GM12878 (cell line): ENCODE measurements at regions of chr18 and their contacts with region 1.

Region 1: DNA sequence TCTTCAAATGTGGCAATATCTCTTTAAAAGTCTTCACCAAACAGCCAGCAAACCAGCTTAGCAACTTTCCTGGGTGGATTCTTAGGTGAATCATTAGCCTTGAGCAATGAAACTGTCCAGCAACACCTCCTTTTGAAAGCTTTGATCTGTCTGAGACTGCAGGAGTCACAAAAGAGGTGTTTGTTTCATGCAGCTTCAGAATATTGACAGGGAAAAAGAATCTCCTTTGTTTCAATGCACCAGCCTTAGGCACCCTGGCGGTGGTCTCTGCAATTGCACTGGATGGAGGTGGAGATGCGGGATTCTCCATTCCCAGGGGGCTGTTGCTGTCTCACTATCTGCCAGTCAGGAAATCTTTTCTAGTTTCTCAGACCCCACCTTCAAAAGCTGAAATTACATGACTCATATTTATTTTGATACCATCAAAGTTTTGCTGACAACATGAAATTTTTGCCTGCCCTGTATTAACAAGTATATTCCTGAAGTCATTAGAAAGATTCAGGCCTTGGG is 76.0 kb upstream of the DSG1 start:
- DNase-seq: no peak
- ATAC-seq: peak; percentile 82
- H3K4me3 ChIP-seq: no peak overlapping the region
- H3K27ac ChIP-seq: no peak overlapping the region
- H3K4me1 ChIP-seq: peaks cover 3% of the 10 kb centered on the region; the same call in 1 of the 2 replicates
- H3K27me3 ChIP-seq: no peaks in the 10 kb centered on the region
- CTCF ChIP-seq: peak; percentile 31 to 56 (median 49)
- EP300 ChIP-seq: no peak
- POLR2A ChIP-seq: no peak
- RAD21 ChIP-seq: no peak

Region 2: DNA sequence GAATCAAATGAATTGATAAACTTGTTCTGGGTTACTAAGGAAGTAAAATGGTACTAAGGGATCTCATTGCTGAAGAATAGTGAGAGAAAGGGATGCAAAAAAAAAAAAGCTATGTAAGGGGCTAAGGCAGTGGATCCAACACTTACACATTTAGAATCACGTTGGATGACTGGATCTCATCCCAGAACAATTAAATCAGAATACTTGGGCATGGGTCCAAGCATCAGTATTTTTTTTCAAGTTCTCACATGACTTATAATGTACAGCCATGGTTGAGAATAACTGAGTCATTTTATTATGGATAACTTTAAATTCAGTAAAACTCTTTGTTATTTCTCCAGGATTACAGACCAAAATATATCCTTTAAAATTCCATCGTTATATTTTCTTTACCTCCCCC is 87.8 kb before region 1 on chr18:
- CTCF ChIA-PET with region 1: no interaction called
- POLR2A ChIA-PET with region 1: no interaction called
- RAD21 ChIA-PET with region 1: no interaction called
- SMC1A ChIA-PET with region 1: no interaction called
- in situ Hi-C with region 1: no loop called
- intact Hi-C with region 1: no loop called
- DNase-seq: no peak
- ATAC-seq: no peak
- H3K4me3 ChIP-seq: no peak overlapping the region
- H3K27ac ChIP-seq: no peak overlapping the region
- H3K4me1 ChIP-seq: no peaks in the 10 kb centered on the region
- H3K27me3 ChIP-seq: no peaks in the 10 kb centered on the region
- CTCF ChIP-seq: no peak
- EP300 ChIP-seq: no peak
- POLR2A ChIP-seq: no peak
- RAD21 ChIP-seq: no peak

Region 3: DNA sequence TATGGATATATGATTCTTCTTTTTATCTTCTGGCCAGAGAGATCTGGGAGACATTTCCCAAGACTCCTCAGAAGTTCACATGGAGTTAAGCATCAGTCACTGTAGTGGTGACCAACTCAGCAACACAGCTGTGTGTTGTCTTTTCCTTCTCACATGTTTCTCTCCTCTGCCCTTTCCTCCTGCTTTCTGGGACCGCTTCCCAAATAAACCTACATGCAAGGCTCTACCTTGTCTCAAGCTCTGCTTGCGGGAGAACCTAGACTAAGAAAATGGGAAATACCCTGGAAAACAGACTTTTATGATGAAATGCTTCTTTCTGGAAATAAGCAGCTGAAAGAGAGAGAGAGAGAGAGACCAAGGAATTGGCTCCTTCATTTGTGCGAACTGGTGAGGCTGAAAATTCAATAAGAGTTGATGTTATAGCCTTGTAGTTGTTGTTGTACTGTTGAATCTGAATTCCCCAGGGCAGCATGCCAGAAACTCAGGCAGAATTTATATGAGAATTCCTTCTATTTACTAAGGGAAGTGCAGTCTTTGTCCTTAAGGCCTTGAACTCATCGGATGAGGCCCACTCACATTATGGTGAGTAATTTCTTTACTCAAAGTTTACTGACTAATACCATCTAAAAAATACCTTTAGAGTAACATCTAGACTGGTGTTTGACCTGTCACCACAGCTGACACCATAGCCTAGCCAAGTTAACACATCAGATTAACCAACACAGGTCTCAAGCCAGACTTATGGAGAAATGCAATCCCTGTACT is 56.6 kb before region 1 on chr18:
- CTCF ChIA-PET with region 1: no interaction called
- POLR2A ChIA-PET with region 1: no interaction called
- RAD21 ChIA-PET with region 1: no interaction called
- SMC1A ChIA-PET with region 1: no interaction called
- in situ Hi-C with region 1: no loop called
- intact Hi-C with region 1: no loop called
- DNase-seq: no peak
- ATAC-seq: no peak
- H3K4me3 ChIP-seq: no peak overlapping the region
- H3K27ac ChIP-seq: no peak overlapping the region
- H3K4me1 ChIP-seq: no peaks in the 10 kb centered on the region
- H3K27me3 ChIP-seq: no peaks in the 10 kb centered on the region
- CTCF ChIP-seq: no peak
- EP300 ChIP-seq: no peak
- POLR2A ChIP-seq: no peak
- RAD21 ChIP-seq: no peak

Region 4: DNA sequence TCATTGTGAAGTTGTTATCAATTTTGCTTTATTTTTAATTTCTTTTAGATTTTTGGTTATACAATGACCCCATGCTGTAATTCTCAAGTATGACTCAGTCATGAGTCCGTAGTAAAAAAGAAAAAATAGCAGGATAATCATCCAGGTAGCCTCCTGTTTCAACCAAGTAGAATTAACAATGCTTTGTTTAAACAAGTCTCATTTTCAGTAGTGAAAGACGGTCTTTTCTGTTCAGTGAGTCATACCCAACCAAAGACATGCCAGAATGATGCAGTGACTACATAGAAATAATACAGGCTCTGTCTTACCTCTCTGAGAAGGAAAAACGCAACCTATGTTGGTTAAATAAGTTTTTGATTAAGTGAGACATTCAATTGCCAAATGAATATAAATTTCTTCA is 11.5 kb before region 1 on chr18:
- CTCF ChIA-PET with region 1: interaction called, 11 read pairs
- POLR2A ChIA-PET with region 1: no interaction called
- RAD21 ChIA-PET with region 1: interaction called, 4 read pairs
- SMC1A ChIA-PET with region 1: interaction called, 12 read pairs
- in situ Hi-C with region 1: no loop called
- intact Hi-C with region 1: no loop called
- DNase-seq: peak; percentile 52
- ATAC-seq: peak; percentile 91
- H3K4me3 ChIP-seq: no peak overlapping the region
- H3K27ac ChIP-seq: peak overlapping the region; percentile 72
- H3K4me1 ChIP-seq: peaks cover 24% of the 10 kb centered on the region
- H3K27me3 ChIP-seq: no peaks in the 10 kb centered on the region
- CTCF ChIP-seq: no peak
- EP300 ChIP-seq: peak; percentile 35 to 77; a peak in 2 of 4 replicates
- POLR2A ChIP-seq: no peak
- RAD21 ChIP-seq: peak; percentile 10; the same call in 1 of the 2 replicates

Region 5: DNA sequence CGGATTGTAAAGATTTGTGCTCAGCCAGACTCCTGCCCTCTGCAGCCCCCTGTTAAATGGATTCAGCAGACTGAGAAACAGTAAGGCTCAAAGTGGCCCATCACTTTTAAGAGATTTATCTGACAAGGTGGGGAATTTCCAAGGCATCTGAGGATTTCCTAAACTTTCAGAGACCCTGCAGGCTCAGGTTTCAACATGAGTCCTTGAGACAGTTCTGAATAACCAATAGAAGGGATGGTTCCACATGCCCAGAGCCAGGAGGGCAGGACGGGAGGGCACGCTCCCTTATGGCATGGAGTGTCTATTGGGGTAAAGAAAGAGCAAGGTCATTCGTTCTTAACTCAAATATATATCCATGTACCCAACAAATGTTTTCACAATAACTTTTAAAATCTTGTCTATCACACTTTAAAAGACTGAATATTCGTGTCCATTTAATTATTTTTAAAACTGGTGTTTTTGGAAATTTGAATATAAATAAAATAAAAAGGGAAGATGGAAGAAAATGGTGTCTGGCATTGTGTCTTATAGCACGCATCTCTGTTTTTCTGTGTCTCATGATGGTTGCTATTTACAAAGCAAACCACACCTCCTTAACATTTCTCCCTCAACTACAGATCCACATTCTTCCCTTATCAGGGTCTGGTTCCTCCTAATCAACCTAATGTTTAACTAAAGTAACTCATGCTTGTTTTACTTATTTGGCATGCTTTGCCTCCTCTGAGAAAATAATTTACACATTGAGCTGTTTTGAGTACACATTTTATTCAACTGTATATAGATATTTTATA is 20.0 kb after region 1 on chr18:
- CTCF ChIA-PET with region 1: interaction called, 8 read pairs
- POLR2A ChIA-PET with region 1: interaction called, 10 read pairs
- RAD21 ChIA-PET with region 1: interaction called, 4 read pairs
- SMC1A ChIA-PET with region 1: interaction called, 64 read pairs
- in situ Hi-C with region 1: no loop called
- intact Hi-C with region 1: no loop called
- DNase-seq: no peak
- ATAC-seq: peak; percentile 47
- H3K4me3 ChIP-seq: no peak overlapping the region
- H3K27ac ChIP-seq: no peak overlapping the region
- H3K4me1 ChIP-seq: peaks cover 7% of the 10 kb centered on the region
- H3K27me3 ChIP-seq: no peaks in the 10 kb centered on the region
- CTCF ChIP-seq: no peak
- EP300 ChIP-seq: no peak
- POLR2A ChIP-seq: no peak
- RAD21 ChIP-seq: no peak

Region 6: GRCh38 chr18:31267823-31268481 is 26.0 kb after region 1 on chr18:
- CTCF ChIA-PET with region 1: interaction called, 6 read pairs
- POLR2A ChIA-PET with region 1: interaction called, 3 read pairs
- RAD21 ChIA-PET with region 1: interaction called, 14 read pairs
- SMC1A ChIA-PET with region 1: interaction called, 20 read pairs
- in situ Hi-C with region 1: no loop called
- intact Hi-C with region 1: no loop called
- DNase-seq: peak; percentile 44
- ATAC-seq: peak; percentile 89
- H3K4me3 ChIP-seq: no peak overlapping the region
- H3K27ac ChIP-seq: peak overlapping the region; percentile 60
- H3K4me1 ChIP-seq: peaks cover 6% of the 10 kb centered on the region
- H3K27me3 ChIP-seq: no peaks in the 10 kb centered on the region
- CTCF ChIP-seq: no peak
- EP300 ChIP-seq: peak; percentile 54 to 64; a peak in 2 of 4 replicates
- POLR2A ChIP-seq: no peak
- RAD21 ChIP-seq: no peak

Region 7: DNA sequence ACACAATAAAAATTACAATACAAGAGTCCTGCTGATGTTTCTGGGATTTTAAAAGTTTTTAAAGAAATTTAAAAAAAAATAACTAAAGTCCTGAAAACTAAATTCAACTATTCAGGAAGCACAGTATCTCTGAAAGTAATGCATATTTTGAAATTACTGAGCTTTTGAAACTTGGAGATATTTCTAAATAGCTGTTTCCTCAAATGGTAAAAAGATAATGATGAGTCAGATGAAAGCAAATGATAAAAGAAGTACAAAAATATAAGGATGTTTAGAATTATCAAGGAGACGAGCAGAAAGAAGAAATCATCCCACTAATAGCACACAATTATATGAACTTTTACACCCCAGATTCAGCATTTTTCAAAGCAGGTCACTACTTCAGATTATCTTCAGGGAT is 608.9 kb after region 1 on chr18:
- CTCF ChIA-PET with region 1: no interaction called
- POLR2A ChIA-PET with region 1: no interaction called
- RAD21 ChIA-PET with region 1: no interaction called
- SMC1A ChIA-PET with region 1: no interaction called
- in situ Hi-C with region 1: no loop called
- intact Hi-C with region 1: no loop called
- DNase-seq: no peak
- ATAC-seq: no peak
- H3K4me3 ChIP-seq: no peak overlapping the region
- H3K27ac ChIP-seq: no peak overlapping the region
- H3K4me1 ChIP-seq: no peaks in the 10 kb centered on the region
- H3K27me3 ChIP-seq: no peaks in the 10 kb centered on the region
- CTCF ChIP-seq: no peak
- EP300 ChIP-seq: no peak
- POLR2A ChIP-seq: no peak
- RAD21 ChIP-seq: no peak